Activated CD4-positive, alpha-beta memory T cell treated with anti-CD3 and anti-CD28 coated beads for 36 hours (primary cell): ENCODE measurements at regions of chr1 and their contacts with region 1.

Region 1: DNA sequence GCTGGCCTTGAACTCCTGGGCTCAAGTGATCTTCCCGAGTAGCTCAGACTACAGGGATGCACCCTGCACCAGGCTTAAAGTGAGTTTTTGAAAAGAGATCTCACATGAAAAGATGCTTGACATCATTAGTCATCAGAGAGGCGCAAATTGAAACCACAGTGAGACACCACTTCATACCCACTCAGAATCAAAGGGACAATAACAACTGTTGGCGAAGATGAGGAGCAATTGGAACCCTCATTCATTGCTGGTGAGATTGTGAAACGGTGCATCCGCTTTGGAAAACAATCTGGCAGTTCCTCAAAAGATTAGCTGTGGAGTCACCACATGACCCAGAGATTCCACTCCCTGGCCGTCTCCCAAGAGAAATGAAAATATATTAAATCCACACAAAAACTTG is 122.3 kb downstream of the PGBD5 start:
- DNase-seq: no peak
- H3K4me3 Mint-ChIP-seq: no peak overlapping the region
- H3K27ac Mint-ChIP-seq: no peak overlapping the region
- H3K4me1 Mint-ChIP-seq: peaks cover 25% of the 10 kb centered on the region
- H3K27me3 Mint-ChIP-seq: peaks cover 2% of the 10 kb centered on the region

Region 2: DNA sequence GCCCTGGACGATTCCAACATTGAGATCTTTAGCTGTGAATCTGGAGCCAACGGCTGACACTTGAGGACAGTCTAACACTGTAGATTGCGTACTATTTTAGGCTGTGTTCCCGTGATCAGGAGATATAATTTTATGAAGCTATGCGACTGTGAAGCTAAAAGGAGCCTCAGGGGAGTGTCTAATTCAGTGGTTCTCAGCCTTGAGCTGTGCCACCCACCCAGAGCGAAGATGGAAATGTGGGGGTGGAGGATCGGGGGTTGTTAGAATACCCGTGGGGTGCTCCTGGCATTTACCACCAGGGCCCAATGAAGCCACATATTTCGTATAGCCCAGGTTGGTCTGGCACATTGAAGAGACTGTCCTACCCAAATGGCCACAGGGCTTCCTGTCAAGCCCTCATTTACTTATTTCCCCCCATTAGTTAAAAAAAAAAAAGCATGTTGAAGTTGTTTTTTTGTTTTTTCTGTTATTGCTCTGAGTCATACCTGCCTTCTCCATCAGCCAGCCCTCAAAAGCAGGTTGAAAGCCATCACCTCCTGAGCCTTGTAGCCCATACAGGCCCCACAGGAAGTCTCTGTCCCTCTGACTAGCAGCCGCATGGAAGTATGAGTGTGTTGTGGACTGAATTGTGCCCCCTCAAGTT is 95.1 kb before region 1 on chr1:
- CTCF ChIA-PET with region 1: interaction called, 5 read pairs
- POLR2A ChIA-PET with region 1: no interaction called
- intact Hi-C with region 1: loop called (anchors 1 kb)
- DNase-seq: peak; percentile 74
- H3K4me3 Mint-ChIP-seq: peak overlapping the region; percentile 41
- H3K27ac Mint-ChIP-seq: peak overlapping the region; percentile 92
- H3K4me1 Mint-ChIP-seq: peaks cover 50% of the 10 kb centered on the region
- H3K27me3 Mint-ChIP-seq: no peaks in the 10 kb centered on the region

Region 3: DNA sequence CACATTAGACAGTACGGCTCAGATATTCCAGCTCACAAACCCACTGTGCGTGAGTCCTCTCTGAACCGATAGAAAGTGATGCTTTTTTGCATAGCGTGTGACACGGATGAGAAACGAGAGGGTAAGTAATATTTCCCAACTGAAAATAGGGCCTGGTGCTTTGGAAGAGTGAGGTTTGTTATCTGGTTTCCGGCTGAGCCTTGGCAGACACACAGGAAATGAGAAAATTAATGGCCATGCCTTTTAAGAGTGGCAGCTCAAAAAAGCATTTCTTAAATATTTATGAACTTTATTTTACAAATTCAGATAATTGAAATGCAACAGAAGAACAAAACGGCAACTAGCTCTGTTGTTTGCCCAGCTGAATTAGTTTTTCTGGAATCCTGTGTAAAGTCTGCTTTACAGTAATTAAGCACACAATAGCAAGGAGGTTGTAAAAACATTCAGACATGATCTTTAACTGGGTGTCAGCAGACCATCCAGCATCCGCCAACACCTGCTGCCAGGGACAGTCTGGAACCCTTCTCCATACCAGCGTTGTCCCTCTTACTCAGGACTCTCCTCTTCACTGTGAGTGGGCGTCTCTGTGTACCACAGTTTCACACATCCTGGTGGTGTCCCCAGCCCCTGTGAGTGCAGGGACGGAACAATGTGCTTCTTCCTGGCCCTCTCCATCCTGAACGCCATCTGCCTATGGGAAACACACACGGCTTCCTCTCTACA is 33.1 kb before region 1 on chr1:
- CTCF ChIA-PET with region 1: interaction called, 5 read pairs
- POLR2A ChIA-PET with region 1: interaction called, 4 read pairs
- intact Hi-C with region 1: loop called (anchors 2 kb)
- DNase-seq: peak; percentile 51
- H3K4me3 Mint-ChIP-seq: no peak overlapping the region
- H3K27ac Mint-ChIP-seq: peak overlapping the region; percentile 84
- H3K4me1 Mint-ChIP-seq: peaks cover 25% of the 10 kb centered on the region
- H3K27me3 Mint-ChIP-seq: no peaks in the 10 kb centered on the region

Region 4: DNA sequence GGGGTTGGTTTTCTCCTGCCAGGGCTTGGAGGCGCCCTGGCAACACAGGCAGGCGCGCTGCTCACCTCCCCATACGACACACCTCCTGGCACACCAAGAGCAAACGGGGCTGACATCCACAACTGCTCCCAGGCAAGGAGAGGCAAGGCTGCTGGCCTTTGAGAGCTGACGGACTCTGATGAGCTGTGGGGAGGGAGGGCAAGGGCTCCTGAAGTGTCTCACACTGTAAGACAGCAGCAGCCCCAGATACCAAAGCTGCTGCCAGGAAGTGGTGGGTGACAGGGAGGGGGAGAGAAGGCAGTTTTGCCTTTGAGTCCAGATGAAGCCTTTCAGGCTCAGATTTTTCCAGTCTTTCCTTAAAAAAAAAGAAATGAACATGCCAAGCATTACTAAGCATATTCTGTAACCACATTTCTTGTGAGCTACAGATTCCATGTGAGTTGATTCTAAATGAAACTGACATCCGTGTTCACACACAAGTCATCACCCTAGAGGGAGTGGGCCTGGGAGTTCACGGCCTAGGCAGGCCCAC is 98.0 kb after region 1 on chr1:
- CTCF ChIA-PET with region 1: no interaction called
- POLR2A ChIA-PET with region 1: no interaction called
- intact Hi-C with region 1: no loop called
- DNase-seq: no peak
- H3K4me3 Mint-ChIP-seq: no peak overlapping the region
- H3K27ac Mint-ChIP-seq: no peak overlapping the region
- H3K4me1 Mint-ChIP-seq: no peaks in the 10 kb centered on the region
- H3K27me3 Mint-ChIP-seq: peaks cover 21% of the 10 kb centered on the region

Region 5: DNA sequence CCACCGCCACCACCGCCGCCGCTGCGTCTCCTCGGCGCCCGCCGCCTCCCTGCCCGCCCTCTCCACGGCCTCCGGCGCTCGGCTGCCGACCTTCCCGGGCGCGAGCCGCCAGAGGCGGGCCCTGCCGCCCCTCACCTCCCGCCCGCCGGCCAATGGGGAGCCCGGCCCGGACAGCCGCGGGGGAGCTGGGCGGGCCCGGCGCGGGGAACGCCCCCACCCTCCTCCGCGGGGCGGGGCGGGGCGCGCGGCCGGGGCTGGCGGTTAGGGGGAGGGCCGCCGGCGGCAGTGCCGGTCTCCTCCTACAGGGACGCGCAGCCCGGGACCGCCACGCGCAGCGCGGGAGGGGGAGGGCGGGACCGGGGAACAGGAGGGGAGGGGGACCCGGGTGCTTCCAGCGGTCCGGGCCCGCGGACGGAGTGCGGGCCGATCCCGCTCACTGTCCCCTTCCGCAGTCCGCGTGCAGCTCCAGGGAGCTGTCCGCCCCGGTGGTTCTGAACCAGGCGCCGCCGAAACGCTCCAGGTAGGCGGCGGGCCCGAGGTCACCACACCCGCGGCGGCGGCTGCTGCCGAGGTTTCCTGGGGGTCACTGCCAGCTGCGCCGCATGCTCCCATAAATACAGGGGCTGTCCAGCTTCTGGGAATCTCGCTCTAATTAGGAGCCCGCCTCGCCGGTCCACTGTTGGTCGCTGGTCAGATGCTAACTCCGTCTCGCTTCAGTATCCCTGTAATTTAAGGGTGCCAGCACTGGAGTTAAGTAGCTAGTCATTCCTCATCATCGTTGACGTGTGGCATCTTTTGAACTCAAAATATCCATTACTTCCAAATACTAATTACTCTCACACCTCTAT is 122.6 kb after region 1 on chr1 and contains the start of gene PGBD5:
- CTCF ChIA-PET with region 1: no interaction called
- POLR2A ChIA-PET with region 1: no interaction called
- intact Hi-C with region 1: no loop called
- DNase-seq: peak; percentile 74
- H3K4me3 Mint-ChIP-seq: peak within 1 kb of the TSS; percentile 62
- H3K27ac Mint-ChIP-seq: no peak within 1 kb of the TSS
- H3K4me1 Mint-ChIP-seq: peaks cover 5% of the 10 kb centered on the region
- H3K27me3 Mint-ChIP-seq: peaks cover 55% of the 10 kb centered on the region
- total RNA-seq, gene PGBD5: 0.02 TPM in 1 of 2 experiments, not detected in the other